ENCODE measurements at regions of chr12 and their contacts with region 1.

Region 1: GRCh38 chr12:8890313-8891085 is 23.8 kb upstream of the PHC1 start:
- DNase-seq: peak; percentile 72

Region 2: DNA sequence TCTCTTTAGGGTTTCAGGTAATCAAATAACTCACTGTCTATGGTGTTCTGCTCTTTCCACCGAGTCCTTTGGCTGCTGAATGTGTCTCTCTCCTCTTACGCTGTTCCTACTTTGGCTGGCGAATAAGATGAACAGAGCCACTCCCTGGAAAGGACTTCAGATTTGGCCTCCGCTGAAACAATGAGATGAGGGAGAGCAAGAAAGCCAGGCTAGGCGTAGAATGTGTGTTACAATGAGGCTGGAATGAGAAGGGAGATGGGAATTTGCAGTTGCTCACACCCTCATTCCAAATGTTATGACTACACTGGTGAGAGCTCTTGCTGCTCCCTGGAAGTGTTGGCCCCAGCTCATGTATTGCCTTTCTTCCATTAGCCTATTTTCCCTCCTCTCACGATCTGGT is 227.9 kb before region 1 on chr12 and contains the start of gene MFAP5:
- CTCF ChIA-PET with region 1: interaction called, 17 read pairs
- POLR2A ChIA-PET with region 1: no interaction called
- DNase-seq: no peak

Region 3: GRCh38 chr12:8771072-8771471 is 119.4 kb before region 1 on chr12:
- CTCF ChIA-PET with region 1: no interaction called
- POLR2A ChIA-PET with region 1: no interaction called
- DNase-seq: no peak

Region 4: DNA sequence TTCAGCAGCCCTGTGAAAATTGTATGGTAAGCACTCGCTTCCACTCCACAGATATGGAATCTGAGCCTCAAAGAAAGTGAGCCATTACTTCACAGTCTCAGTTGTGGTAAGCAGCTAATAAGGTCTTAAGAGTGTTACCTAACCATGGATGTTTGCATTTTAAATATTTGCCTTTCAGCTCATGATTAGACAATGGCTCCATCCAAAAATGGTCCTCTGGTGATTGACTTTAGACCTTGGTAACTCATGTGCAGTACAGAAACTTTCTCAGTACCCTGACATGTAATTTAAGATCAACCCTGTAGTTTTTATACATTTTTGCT is 223.4 kb after region 1 on chr12:
- CTCF ChIA-PET with region 1: no interaction called
- POLR2A ChIA-PET with region 1: no interaction called
- DNase-seq: no peak